Thyroid gland (tissue), 4 donors: ENCODE measurements at regions of chr16 and their contacts with region 1.

Region 1: GRCh38 chr16:84186685-84187437 is at the start of gene TAF1C:
- DNase-seq: peak; percentile 92 to 93
- H3K4me3 ChIP-seq: peak within 1 kb of the TSS; percentile 71 to 93 (median 73)
- H3K27ac ChIP-seq: peak within 1 kb of the TSS in 2 of 3 donors; percentile 33 to 42
- H3K4me1 ChIP-seq: peaks cover 8 to 9% of the 10 kb centered on the region in 2 donors
- H3K27me3 ChIP-seq: no peaks in the 10 kb centered on the region
- CTCF ChIP-seq: peak in 5 of 6 experiments; percentile 90 to 99 (median 97)
- POLR2A ChIP-seq: peak in 1 of 2 donors; percentile 41
- total RNA-seq, gene TAF1C: 29.4 to 64.2 (median 56.3) TPM

Region 2: GRCh38 chr16:83967806-83968305 is 219.0 kb before region 1 on chr16 and contains the start of gene NECAB2:
- intact Hi-C with region 1: loop called (anchors 10 kb)
- DNase-seq: peak; percentile 38 to 44
- H3K4me3 ChIP-seq: peak within 1 kb of the TSS in 1 of 3 donors; percentile 21
- H3K27ac ChIP-seq: no peak within 1 kb of the TSS
- H3K4me1 ChIP-seq: peaks cover 0 to 4% of the 10 kb centered on the region in 2 donors
- H3K27me3 ChIP-seq: no peaks in the 10 kb centered on the region
- CTCF ChIP-seq: peak in 3 of 6 experiments; percentile 33 to 72 (median 47)
- POLR2A ChIP-seq: no peak
- total RNA-seq, gene NECAB2: 0.63 to 0.94 TPM in 2 of 4 donors, not detected in the others

Region 3: DNA sequence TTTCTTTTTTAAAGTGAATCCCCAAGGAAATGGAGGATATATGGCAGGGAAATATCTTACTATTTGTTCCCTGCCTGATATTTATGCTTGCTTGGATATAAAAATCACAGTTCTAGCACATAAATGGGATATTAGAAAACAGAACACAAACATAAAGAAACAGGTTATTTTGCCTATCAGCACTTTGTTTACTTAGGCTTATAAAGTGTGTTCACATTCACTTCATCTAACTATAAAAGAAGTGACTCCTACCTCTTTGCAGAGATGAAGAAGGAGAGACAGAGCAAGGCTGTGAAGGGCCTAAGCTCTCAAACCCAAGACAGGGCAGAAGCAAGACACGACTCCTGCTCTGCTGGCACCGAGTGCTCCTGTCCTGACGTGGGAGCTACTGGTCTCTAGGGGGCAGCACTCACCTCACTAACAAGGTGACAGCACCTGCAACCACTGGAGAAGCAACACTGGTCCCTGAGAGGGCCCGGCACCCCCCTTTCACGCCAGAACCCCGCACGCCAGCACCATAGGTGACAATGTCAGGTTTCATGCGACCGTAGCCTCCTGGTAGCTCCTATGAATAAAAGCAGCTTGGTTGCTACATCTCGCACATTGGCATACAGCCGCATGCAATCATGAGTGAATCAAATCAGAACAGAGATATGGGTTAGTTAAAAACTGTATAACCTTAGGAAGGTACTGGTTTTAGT is 102.1 kb before region 1 on chr16:
- intact Hi-C with region 1: loop called (anchors 5 kb)
- DNase-seq: peak; percentile 72 to 79
- H3K4me3 ChIP-seq: no peak overlapping the region
- H3K27ac ChIP-seq: no peak overlapping the region
- H3K4me1 ChIP-seq: no peaks in the 10 kb centered on the region
- H3K27me3 ChIP-seq: no peaks in the 10 kb centered on the region
- CTCF ChIP-seq: peak in 5 of 6 experiments; percentile 67 to 87 (median 78)
- POLR2A ChIP-seq: no peak

Region 4: DNA sequence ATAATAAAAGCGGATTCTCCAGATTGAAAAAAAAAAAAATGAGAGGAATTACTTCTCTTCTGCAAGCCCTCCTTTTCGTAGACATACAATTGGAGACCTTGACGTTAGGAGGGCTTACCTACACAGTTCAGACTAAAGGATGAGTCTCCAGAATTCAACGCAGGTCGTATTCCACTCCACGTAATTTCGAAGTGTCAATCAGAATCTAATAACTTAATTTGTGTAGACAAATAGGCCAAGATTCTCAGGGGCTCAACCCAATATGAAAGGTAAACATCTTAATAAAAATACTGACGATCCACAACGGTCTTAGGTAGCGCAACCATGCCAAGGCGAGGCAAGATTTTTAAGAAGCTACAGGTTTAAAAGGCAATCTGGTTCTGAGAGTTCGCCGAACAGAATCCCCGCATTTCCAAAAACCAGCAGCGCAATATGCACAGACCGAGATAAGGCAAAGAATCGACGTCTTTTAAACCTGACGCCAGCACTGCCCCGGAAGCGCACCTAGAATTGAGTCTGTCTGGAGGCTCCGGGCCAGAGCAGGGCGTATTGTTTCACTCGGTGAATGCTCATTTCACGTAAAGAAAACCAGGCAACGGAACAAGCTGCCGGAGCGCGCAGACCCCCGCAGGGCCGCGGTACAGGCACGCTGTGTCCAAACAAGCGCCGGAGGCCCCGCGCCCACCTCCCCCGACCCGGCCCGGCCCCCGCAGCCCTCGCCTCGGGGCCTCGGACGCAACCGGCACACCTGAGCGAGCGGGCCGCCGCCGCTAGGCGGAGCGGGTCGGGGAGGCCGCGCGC is 70.7 kb before region 1 on chr16:
- intact Hi-C with region 1: no loop called
- DNase-seq: peak; percentile 54 to 58
- H3K4me3 ChIP-seq: peak overlapping the region; percentile 81 to 93 (median 88)
- H3K27ac ChIP-seq: peak overlapping the region; percentile 66 to 92 (median 68)
- H3K4me1 ChIP-seq: peaks cover 17 to 24% of the 10 kb centered on the region in 2 donors
- H3K27me3 ChIP-seq: no peaks in the 10 kb centered on the region
- CTCF ChIP-seq: peak in 3 of 6 experiments; percentile 17 to 60 (median 51)
- POLR2A ChIP-seq: no peak

Region 5: DNA sequence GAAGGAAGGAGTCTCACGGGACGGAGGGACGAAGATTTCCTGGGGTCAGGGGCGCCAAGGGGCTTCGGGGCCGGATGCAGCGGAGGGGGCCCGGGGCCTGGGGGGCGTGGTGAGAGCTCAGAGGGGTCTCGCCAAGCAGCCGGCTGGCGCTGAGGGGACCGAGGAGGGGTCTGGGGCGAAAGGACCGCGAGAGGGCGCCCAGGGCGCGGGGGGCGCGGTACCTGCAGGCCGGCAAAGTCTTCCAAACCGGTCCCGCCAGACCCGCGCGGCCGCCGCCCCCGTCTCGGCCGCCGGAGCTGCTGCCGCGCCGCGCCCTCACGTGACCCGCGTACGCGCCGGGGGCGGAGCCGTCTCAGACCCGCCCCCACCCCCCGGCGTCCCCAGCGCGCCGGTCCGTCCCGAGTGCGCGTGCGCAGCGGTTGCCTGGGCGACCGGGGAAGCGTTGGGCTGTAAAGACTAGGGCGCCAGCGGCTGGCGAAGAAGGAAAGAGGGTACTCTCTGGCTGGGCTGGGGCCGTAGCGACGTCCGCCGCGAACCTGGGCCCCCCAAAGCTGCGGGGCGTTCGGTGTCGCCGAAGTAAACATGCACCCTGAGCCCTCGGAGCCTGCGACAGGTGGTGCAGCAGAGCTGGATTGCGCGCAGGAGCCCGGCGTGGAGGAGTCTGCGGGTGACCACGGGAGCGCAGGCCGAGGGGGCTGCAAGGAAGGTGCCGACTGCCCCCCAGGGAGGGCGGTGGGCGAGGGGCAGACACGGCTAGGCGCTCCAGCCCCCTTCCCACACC is 41.8 kb before region 1 on chr16 and contains the starts of genes DNAAF1 and HSDL1:
- intact Hi-C with region 1: loop called (anchors 5 kb)
- DNase-seq: peak; percentile 91 to 93
- H3K4me3 ChIP-seq: peak within 1 kb of the TSS; percentile 69 to 96 (median 90)
- H3K27ac ChIP-seq: peak within 1 kb of the TSS in 2 of 3 donors; percentile 88 to 89
- H3K4me1 ChIP-seq: peaks cover 3 to 7% of the 10 kb centered on the region in 2 donors
- H3K27me3 ChIP-seq: no peaks in the 10 kb centered on the region
- CTCF ChIP-seq: peak in 2 of 6 experiments; percentile 11 to 23
- POLR2A ChIP-seq: peak; percentile 86 to 95
- total RNA-seq, gene DNAAF1: 1.5 to 11.2 (median 2.8) TPM
- total RNA-seq, gene HSDL1: 37.2 to 82.9 (median 59.5) TPM